Left cardiac atrium (tissue), 4 donors: ENCODE measurements at regions of chr12 and their contacts with region 1.

Region 1: GRCh38 chr12:94149119-94149780 is 873 bp downstream of the PLXNC1 start:
- DNase-seq: peak; percentile 44
- ATAC-seq: peak; percentile 40 to 54

Region 2: GRCh38 chr12:94289461-94290312 is 140.4 kb after region 1 on chr12:
- intact Hi-C with region 1: loop called in 1 of 2 experiments (anchors 10 kb)
- DNase-seq: peak; percentile 31
- ATAC-seq: peak; percentile 43 to 86

Region 3: DNA sequence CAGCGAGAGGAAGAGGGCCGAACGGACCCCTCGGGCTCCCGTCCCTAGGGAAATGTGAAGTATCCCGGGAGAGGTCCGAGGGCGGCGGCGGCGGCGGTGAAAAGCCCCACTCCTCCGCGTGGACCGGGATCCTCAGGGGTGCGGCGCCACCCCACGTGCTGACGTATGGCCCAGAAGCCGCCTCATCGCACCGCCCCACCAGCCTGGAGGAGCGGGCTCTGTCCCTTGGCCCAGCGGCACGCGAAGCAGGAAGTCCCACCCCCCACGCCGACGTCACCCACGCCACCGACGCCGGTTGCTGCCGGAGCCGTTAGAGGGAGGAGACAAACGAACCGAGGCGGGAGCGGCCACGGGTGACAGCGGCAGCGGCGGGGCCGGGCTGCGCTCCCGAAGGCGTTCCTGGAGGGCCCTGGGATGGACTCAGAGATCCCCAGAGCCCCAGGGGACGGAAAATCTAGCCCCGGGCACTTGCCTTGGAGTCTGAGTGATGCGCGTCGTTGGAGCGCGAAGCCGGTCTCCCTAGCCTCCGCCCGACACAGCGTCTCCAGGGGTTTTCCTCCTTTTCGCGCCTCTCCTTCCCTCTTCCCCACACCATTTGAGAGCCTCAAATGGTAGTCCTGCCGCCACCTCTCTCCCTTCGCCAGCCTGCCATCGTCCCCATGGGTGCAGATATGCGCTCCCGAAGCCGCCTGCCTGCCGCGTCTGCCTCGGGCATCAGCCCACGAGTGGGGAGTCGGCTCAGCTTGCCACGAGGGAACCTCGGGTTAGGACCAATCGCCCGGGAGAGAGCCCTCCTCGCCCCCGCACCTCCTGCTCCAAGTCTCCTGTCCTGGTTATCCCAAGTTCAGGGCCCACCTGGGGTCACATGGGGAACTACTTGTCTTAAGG is 310.7 kb after region 1 on chr12 and contains the start of gene CEP83:
- intact Hi-C with region 1: loop called in 1 of 2 experiments (anchors 10 kb)
- DNase-seq: peak; percentile 99
- ATAC-seq: peak; percentile 99 to 100
- total RNA-seq, gene CEP83: 11.6 to 12.0 TPM

Region 4: GRCh38 chr12:94532490-94533422 is 383.5 kb after region 1 on chr12:
- intact Hi-C with region 1: loop called (anchors 2 to 5 kb)
- DNase-seq: peak; percentile 73
- ATAC-seq: peak; percentile 89 to 95